A673 (cell line): ENCODE measurements at regions of chr15 and their contacts with region 1.

Region 1: GRCh38 chr15:80173022-80173759 is 20.4 kb downstream of the FAH start:
- DNase-seq: peak; percentile 58
- H3K4me3 ChIP-seq: no peak overlapping the region
- H3K27ac ChIP-seq: no peak overlapping the region
- H3K4me1 ChIP-seq: no peaks in the 10 kb centered on the region
- H3K27me3 ChIP-seq: no peaks in the 10 kb centered on the region
- CTCF ChIP-seq: peak; percentile 79

Region 2: GRCh38 chr15:79896637-79897379 is 276.4 kb before region 1 on chr15 and contains the start of gene MTHFS:
- CTCF ChIA-PET with region 1: no interaction called
- POLR2A ChIA-PET with region 1: no interaction called
- intact Hi-C with region 1: loop called (anchors 2 kb)
- DNase-seq: peak; percentile 80
- H3K4me3 ChIP-seq: peak within 1 kb of the TSS; percentile 89
- H3K27ac ChIP-seq: peak within 1 kb of the TSS; percentile 92
- H3K4me1 ChIP-seq: no peaks in the 10 kb centered on the region
- H3K27me3 ChIP-seq: no peaks in the 10 kb centered on the region
- CTCF ChIP-seq: peak; percentile 74
- total RNA-seq, gene MTHFS: 8.7 and 9.4 TPM in 2 replicates

Region 3: DNA sequence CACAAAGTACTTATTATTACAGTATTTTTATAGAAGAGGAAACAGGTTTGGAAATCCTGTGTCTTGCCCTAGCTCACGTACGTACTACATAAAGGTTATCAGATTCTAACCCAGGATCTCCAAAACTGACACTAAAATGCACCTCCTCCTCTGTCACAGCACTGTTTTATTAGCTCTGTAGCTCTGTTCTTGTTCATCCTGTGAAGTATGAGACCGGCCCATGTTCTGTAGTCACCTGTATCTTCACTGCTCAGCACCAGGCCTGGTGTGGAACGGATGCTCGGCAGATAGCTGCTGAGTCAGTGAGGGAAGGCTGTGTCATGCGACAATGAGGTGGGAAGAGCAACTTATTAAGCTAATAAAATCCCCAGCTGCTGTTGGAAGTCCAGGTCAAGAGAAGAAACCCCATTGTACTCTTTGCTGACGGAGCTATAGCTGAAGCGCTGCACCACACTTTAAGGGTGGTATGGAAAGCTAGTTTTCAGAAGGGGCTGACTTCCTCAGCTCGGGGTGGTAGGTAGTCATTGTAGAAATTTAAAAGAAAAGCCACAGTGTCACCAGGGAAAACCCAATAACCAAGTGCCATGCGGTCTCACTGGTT is 225.0 kb before region 1 on chr15:
- CTCF ChIA-PET with region 1: no interaction called
- POLR2A ChIA-PET with region 1: no interaction called
- intact Hi-C with region 1: no loop called
- DNase-seq: no peak
- H3K4me3 ChIP-seq: no peak overlapping the region
- H3K27ac ChIP-seq: no peak overlapping the region
- H3K4me1 ChIP-seq: no peaks in the 10 kb centered on the region
- H3K27me3 ChIP-seq: peaks cover 3% of the 10 kb centered on the region
- CTCF ChIP-seq: no peak

Region 4: DNA sequence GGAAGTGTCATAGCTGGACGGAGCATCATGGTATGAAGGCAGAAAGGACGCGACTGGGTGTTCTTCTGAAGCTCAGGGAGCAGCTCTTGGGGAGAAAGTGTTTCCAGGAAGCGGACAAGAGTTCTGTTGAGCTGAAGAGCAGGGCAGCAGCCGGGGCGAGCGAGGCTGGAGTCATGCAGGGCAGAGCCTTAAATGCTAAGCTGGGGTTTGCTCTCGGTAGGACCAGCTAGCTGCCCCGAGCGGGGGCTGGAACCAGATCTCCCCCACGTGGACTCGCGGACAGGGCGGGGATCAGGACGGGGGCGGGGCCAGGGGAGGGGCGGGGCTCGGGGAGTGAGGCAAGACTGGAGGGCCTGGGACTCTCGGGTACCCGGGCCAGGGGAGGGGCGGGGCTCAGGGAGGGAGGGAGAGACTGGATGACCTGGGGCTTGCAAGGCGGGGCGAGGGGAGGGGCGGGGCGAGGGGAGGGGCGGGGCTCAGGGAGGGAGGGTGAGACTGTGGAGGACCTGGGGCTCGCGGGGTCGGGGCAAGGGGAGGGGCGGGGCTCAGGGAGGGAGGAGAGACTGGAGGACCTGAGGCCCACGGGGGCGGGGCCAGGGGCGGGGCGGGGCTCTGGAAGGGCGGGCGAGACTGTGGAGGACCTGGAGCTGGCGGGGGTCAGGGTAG is 20.9 kb before region 1 on chr15:
- CTCF ChIA-PET with region 1: interaction called, 12 read pairs
- POLR2A ChIA-PET with region 1: no interaction called
- intact Hi-C with region 1: no loop called
- DNase-seq: peak; percentile 95
- H3K4me3 ChIP-seq: peak overlapping the region; percentile 67
- H3K27ac ChIP-seq: no peak overlapping the region
- H3K4me1 ChIP-seq: peaks cover 4% of the 10 kb centered on the region
- H3K27me3 ChIP-seq: no peaks in the 10 kb centered on the region
- CTCF ChIP-seq: no peak